Endothelial cell of umbilical vein (primary cell): ENCODE measurements at regions of chrX and their contacts with region 1.

Region 1: GRCh38 chrX:77910108-77910840 is at the start of gene ATP7A:
- DNase-seq: peak; percentile 87
- H3K4me3 ChIP-seq: peak within 1 kb of the TSS; percentile 49 to 98 (median 80)
- H3K27ac ChIP-seq: peak within 1 kb of the TSS; percentile 78
- H3K4me1 ChIP-seq: peaks cover 6% of the 10 kb centered on the region
- H3K27me3 ChIP-seq: no peaks in the 10 kb centered on the region
- CTCF ChIP-seq: peak; percentile 49 to 69
- POLR2A ChIP-seq: no peak
- total RNA-seq, gene ATP7A: 8.7 and 8.8 TPM in 2 replicates

Region 2: GRCh38 chrX:77675986-77676385 is 234.3 kb before region 1 on chrX:
- CTCF ChIA-PET with region 1: no interaction called
- POLR2A ChIA-PET with region 1: no interaction called
- dilution Hi-C with region 1: no loop called
- intact Hi-C with region 1: no loop called
- DNase-seq: no peak
- H3K4me3 ChIP-seq: no peak overlapping the region
- H3K27ac ChIP-seq: no peak overlapping the region
- H3K4me1 ChIP-seq: no peaks in the 10 kb centered on the region
- H3K27me3 ChIP-seq: no peaks in the 10 kb centered on the region
- CTCF ChIP-seq: no peak
- POLR2A ChIP-seq: no peak

Region 3: GRCh38 chrX:78024349-78025108 is 114.3 kb after region 1 on chrX:
- CTCF ChIA-PET with region 1: interaction called, 45 read pairs
- POLR2A ChIA-PET with region 1: no interaction called
- dilution Hi-C with region 1: no loop called
- intact Hi-C with region 1: loop called (anchors 1 kb)
- DNase-seq: peak; percentile 16
- H3K4me3 ChIP-seq: no peak overlapping the region
- H3K27ac ChIP-seq: no peak overlapping the region
- H3K4me1 ChIP-seq: no peaks in the 10 kb centered on the region
- H3K27me3 ChIP-seq: no peaks in the 10 kb centered on the region
- CTCF ChIP-seq: peak; percentile 30 to 38
- POLR2A ChIP-seq: no peak

Region 4: DNA sequence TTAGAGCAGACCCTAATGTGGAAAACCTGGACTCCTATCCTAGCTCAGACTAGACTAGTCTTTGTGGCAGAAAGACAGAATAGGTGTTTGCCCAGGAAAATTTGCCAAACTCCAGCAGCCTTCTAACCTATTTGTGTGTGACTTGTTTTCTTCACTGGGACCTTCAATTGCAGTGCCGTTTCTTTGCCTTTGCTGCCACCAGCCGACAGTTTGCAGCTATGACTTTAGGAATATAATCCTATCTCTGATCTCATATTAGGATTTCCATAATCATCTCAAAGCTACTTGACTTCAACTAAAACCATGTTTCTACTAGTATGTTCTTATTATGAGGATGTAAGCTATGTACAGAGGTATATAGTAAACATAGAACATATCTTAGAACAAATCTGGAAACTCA is 119.4 kb after region 1 on chrX:
- CTCF ChIA-PET with region 1: interaction called, 45 read pairs
- POLR2A ChIA-PET with region 1: no interaction called
- dilution Hi-C with region 1: no loop called
- intact Hi-C with region 1: loop called (anchors 1 kb)
- DNase-seq: peak; percentile 32
- H3K4me3 ChIP-seq: no peak overlapping the region
- H3K27ac ChIP-seq: no peak overlapping the region
- H3K4me1 ChIP-seq: no peaks in the 10 kb centered on the region
- H3K27me3 ChIP-seq: no peaks in the 10 kb centered on the region
- CTCF ChIP-seq: peak; percentile 22 to 36
- POLR2A ChIP-seq: no peak

Region 5: GRCh38 chrX:78092296-78092695 is 182.0 kb after region 1 on chrX:
- CTCF ChIA-PET with region 1: interaction called, 4 read pairs
- POLR2A ChIA-PET with region 1: no interaction called
- dilution Hi-C with region 1: no loop called
- intact Hi-C with region 1: loop called (anchors 1 kb)
- DNase-seq: peak; percentile 45
- H3K4me3 ChIP-seq: no peak overlapping the region
- H3K27ac ChIP-seq: no peak overlapping the region
- H3K4me1 ChIP-seq: no peaks in the 10 kb centered on the region
- H3K27me3 ChIP-seq: peaks cover 0 to 2% of the 10 kb centered on the region in 2 experiments
- CTCF ChIP-seq: peak; percentile 15 to 46
- POLR2A ChIP-seq: no peak